RWPE1 (cell line): ENCODE measurements at regions of chr2 and their contacts with region 1.

Region 1: GRCh38 chr2:18645315-18645714 is 55.9 kb upstream of the NT5C1B start:
- DNase-seq: no peak
- H3K27ac ChIP-seq: no peak overlapping the region
- CTCF ChIP-seq: no peak

Region 2: DNA sequence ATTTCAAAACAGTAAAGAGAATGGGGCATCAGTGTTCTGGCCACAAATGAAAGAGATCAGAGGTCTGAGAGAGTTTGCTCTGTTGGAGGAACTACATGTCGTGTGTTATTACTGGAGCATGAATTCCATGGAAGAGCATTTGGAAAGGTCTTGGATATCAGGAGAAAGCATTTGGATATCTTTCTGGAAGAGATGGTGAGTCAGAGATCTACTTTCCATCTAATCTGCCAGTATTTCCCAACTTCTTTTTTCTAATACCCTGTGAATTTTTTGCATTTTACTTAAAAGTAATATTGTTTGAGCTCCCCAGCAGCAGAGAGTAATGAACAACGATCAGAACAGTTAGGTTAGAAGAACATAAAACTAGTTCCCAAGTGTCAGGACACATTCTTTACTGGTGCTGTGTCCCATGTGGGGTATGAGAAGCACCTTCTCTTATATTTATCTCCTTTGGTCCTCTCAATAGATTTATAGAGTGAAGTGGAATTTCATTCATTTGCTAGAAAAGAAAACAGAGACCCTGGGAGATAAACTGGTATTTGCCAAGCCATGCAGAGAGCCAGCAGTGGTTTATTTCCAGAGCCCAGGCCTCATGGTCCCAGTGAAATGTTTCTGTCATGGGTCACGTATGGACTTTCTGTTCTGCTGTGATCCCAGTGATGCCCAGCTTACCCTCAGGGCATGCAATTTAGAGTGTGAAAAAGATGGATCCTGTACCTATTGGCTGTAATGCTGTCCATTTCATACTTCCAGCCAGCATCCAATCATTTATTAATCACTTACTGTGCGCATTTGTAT is 74.9 kb after region 1 on chr2:
- CTCF ChIA-PET with region 1: no interaction called
- POLR2A ChIA-PET with region 1: interaction called, 13 read pairs
- DNase-seq: peak; percentile 57
- H3K27ac ChIP-seq: no peak overlapping the region
- CTCF ChIP-seq: no peak